B cell (primary cell): ENCODE measurements at regions of chr9 and their contacts with region 1.

Region 1: DNA sequence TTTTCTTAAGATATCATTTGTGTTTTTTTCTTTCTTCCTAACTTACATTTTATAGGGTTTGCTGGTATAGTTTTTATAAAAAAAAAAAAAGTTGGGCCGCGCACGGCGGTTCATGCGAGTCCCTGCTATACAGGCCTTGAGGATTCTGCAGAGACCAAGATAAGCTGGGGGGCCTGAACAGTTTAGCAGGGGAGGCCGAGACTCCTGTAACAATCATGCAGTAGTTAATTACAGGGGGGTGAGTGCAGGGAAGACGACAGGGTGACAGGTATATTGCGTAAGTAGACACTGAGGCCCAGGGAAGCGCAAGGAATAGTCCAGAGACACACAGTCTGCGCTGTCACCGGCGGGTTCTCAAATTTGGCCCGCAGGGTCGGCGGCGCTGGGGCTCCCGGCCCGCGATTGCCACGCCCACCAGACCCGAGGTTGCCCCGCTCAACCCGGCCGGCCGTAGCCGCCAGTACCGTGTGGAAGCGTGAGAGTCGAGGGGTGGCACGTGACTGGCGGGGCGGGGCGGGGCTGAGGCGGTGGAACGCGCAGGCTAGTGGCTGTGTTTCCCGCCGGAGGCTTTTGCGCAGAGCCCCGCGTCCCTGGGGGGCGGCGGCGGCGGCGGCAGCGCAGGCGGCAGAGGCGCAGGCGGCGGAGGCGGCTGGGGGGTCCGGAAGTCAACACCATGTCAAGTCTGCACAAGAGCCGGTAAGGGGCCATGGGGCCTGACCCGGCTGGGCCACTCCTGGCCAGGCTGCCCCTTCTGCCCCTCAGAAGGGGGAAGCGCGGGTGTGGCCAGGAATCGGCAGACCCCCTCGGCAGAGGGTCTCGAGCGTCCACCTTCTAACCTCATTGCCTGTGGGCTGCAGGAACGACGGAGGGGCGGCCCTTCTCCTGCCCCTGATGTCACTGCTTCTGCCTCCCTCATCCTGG is at the start of gene TBC1D13:
- DNase-seq: peak; percentile 96
- ATAC-seq: peak; percentile 96
- H3K4me3 ChIP-seq: peak within 1 kb of the TSS; percentile 71 to 94 (median 91)
- H3K4me3 Mint-ChIP-seq: peak within 1 kb of the TSS; percentile 91
- H3K27ac ChIP-seq: peak within 1 kb of the TSS; percentile 73 to 86
- H3K27ac Mint-ChIP-seq: peak within 1 kb of the TSS; percentile 85
- H3K4me1 ChIP-seq: peaks cover 18 to 21% of the 10 kb centered on the region in 2 donors
- H3K4me1 Mint-ChIP-seq: peaks cover 24% of the 10 kb centered on the region
- H3K27me3 ChIP-seq: no peaks in the 10 kb centered on the region
- H3K27me3 Mint-ChIP-seq: no peaks in the 10 kb centered on the region
- CTCF ChIP-seq: no peak
- total RNA-seq, gene TBC1D13: 29.1 and 31.8 TPM in 2 replicates

Region 2: GRCh38 chr9:128370826-128371621 is 415.9 kb before region 1 on chr9 and contains the start of gene URM1:
- CTCF ChIA-PET with region 1: interaction called, 4 read pairs
- POLR2A ChIA-PET with region 1: no interaction called
- intact Hi-C with region 1: loop called (anchors 2 kb)
- DNase-seq: peak; percentile 96
- ATAC-seq: peak; percentile 94
- H3K4me3 ChIP-seq: peak within 1 kb of the TSS; percentile 86 to 98 (median 90)
- H3K4me3 Mint-ChIP-seq: peak within 1 kb of the TSS; percentile 95
- H3K27ac ChIP-seq: peak within 1 kb of the TSS; percentile 83 to 96
- H3K27ac Mint-ChIP-seq: peak within 1 kb of the TSS; percentile 96
- H3K4me1 ChIP-seq: peaks cover 15 to 23% of the 10 kb centered on the region in 2 donors
- H3K4me1 Mint-ChIP-seq: peaks cover 30% of the 10 kb centered on the region
- H3K27me3 ChIP-seq: no peaks in the 10 kb centered on the region
- H3K27me3 Mint-ChIP-seq: no peaks in the 10 kb centered on the region
- CTCF ChIP-seq: no peak
- total RNA-seq, gene URM1: 35.6 and 43.8 TPM in 2 replicates

Region 3: GRCh38 chr9:128688512-128689292 is 98.2 kb before region 1 on chr9 and contains the start of gene SET:
- CTCF ChIA-PET with region 1: no interaction called
- POLR2A ChIA-PET with region 1: interaction called, 3 read pairs
- intact Hi-C with region 1: loop called (anchors 1 kb)
- DNase-seq: peak; percentile 97
- ATAC-seq: peak; percentile 81
- H3K4me3 ChIP-seq: peak within 1 kb of the TSS; percentile 57 to 81 (median 70)
- H3K4me3 Mint-ChIP-seq: peak within 1 kb of the TSS; percentile 89
- H3K27ac ChIP-seq: peak within 1 kb of the TSS; percentile 89 to 91
- H3K27ac Mint-ChIP-seq: peak within 1 kb of the TSS; percentile 95
- H3K4me1 ChIP-seq: peaks cover 47 to 57% of the 10 kb centered on the region in 2 donors
- H3K4me1 Mint-ChIP-seq: peaks cover 60% of the 10 kb centered on the region
- H3K27me3 ChIP-seq: no peaks in the 10 kb centered on the region
- H3K27me3 Mint-ChIP-seq: no peaks in the 10 kb centered on the region
- CTCF ChIP-seq: no peak
- total RNA-seq, gene SET: 306 and 309 TPM in 2 replicates

Region 4: GRCh38 chr9:128771745-128772519 is 15.0 kb before region 1 on chr9 and contains the start of gene ZER1:
- CTCF ChIA-PET with region 1: interaction called, 3 read pairs
- POLR2A ChIA-PET with region 1: interaction called, 5 read pairs
- intact Hi-C with region 1: loop called (anchors 1 kb)
- DNase-seq: peak; percentile 95
- ATAC-seq: peak; percentile 93
- H3K4me3 ChIP-seq: peak within 1 kb of the TSS; percentile 69 to 96 (median 77)
- H3K4me3 Mint-ChIP-seq: peak within 1 kb of the TSS; percentile 97
- H3K27ac ChIP-seq: peak within 1 kb of the TSS; percentile 86 to 93
- H3K27ac Mint-ChIP-seq: peak within 1 kb of the TSS; percentile 96
- H3K4me1 ChIP-seq: peaks cover 9 to 19% of the 10 kb centered on the region in 2 donors
- H3K4me1 Mint-ChIP-seq: peaks cover 25% of the 10 kb centered on the region
- H3K27me3 ChIP-seq: no peaks in the 10 kb centered on the region
- H3K27me3 Mint-ChIP-seq: no peaks in the 10 kb centered on the region
- CTCF ChIP-seq: no peak
- total RNA-seq, gene ZER1: 42.2 and 44.0 TPM in 2 replicates

Region 5: GRCh38 chr9:128829477-128830251 is 42.7 kb after region 1 on chr9 and contains the start of gene SPOUT1:
- CTCF ChIA-PET with region 1: no interaction called
- POLR2A ChIA-PET with region 1: no interaction called
- intact Hi-C with region 1: loop called (anchors 1 kb)
- DNase-seq: peak; percentile 95
- ATAC-seq: peak; percentile 99
- H3K4me3 ChIP-seq: peak within 1 kb of the TSS; percentile 43 to 97 (median 91)
- H3K4me3 Mint-ChIP-seq: peak within 1 kb of the TSS; percentile 97
- H3K27ac ChIP-seq: peak within 1 kb of the TSS; percentile 42 to 74
- H3K27ac Mint-ChIP-seq: peak within 1 kb of the TSS; percentile 95
- H3K4me1 ChIP-seq: peaks cover 12 to 17% of the 10 kb centered on the region in 2 donors
- H3K4me1 Mint-ChIP-seq: peaks cover 19% of the 10 kb centered on the region
- H3K27me3 ChIP-seq: no peaks in the 10 kb centered on the region
- H3K27me3 Mint-ChIP-seq: no peaks in the 10 kb centered on the region
- CTCF ChIP-seq: no peak
- total RNA-seq, gene SPOUT1: 70.0 and 73.0 TPM in 2 replicates